ENCODE measurements at regions of chr2 and their contacts with region 1.

Region 1: DNA sequence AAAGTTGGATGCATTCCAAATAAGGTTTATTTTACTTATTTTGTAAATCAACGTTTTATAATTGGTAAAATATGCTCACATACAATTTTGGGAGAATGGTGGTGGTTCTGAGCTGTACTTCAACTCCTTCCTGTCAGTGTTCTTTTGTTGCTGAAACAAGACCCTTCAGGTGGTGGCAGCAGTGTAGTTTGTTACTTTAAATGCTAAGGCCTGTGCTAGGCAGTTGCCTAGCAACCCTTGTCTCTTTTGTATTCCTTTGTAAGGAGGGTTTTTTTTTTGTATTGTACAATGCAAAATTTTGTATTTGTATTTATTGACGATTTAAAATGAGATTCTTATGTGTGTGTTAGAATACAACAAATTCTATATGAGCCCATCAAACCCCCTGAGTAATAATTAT is 166.0 kb upstream of the FAM98A start:
- DNase-seq: no peak
- H3K4me3 ChIP-seq: no peak overlapping the region
- H3K27ac ChIP-seq: no peak overlapping the region
- H3K4me1 ChIP-seq: no peaks in the 10 kb centered on the region
- H3K27me3 ChIP-seq: no peaks in the 10 kb centered on the region
- CTCF ChIP-seq: no peak
- POLR2A ChIP-seq: no peak

Region 2: GRCh38 chr2:33153008-33153407 is 612.1 kb before region 1 on chr2:
- intact Hi-C with region 1: no loop called
- DNase-seq: no peak
- H3K4me3 ChIP-seq: no peak overlapping the region
- H3K27ac ChIP-seq: no peak overlapping the region
- H3K4me1 ChIP-seq: no peaks in the 10 kb centered on the region
- H3K27me3 ChIP-seq: no peaks in the 10 kb centered on the region
- CTCF ChIP-seq: no peak
- POLR2A ChIP-seq: no peak

Region 3: DNA sequence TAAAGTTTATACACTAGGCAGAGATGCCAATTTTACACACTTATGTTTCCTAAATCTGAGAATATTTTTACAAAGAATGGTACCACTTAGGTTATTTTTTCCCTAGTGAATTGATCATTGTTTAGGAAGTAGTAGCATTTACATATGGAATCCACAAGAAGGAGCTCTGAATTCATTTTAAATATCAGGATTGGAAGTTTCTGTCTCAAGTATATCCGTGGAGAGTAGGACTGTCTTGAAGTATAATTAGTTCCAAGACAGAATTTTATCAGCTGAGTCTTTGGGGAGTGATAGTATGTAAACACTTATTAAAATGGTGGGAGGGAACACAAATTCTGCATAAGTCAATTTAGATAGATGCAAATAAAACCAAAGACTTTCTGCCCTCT is 83.8 kb before region 1 on chr2:
- intact Hi-C with region 1: loop called (anchors 10 kb)
- DNase-seq: no peak
- H3K4me3 ChIP-seq: no peak overlapping the region
- H3K27ac ChIP-seq: no peak overlapping the region
- H3K4me1 ChIP-seq: no peaks in the 10 kb centered on the region
- H3K27me3 ChIP-seq: no peaks in the 10 kb centered on the region
- CTCF ChIP-seq: no peak
- POLR2A ChIP-seq: no peak

Region 4: DNA sequence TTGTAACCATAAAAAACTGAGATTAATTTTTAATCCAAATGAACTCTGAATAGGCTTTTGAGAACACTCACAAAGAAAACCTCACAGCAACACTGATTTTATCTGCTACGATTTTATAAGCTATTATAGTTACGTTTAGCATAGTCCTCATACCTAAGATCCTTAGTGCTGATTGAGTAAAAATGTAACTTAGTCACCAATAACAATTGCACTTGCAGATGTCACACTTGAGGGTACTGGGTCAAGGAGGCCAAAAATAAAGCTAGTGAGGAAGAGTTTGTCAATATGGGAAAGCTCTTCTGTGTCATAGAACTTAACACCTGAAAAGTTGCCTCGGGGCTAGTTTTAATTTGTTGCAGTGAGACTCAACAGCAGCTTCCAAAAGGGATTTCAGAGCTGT is 540.5 kb after region 1 on chr2:
- intact Hi-C with region 1: no loop called
- DNase-seq: no peak
- H3K4me3 ChIP-seq: no peak overlapping the region
- H3K27ac ChIP-seq: no peak overlapping the region
- H3K4me1 ChIP-seq: no peaks in the 10 kb centered on the region
- H3K27me3 ChIP-seq: no peaks in the 10 kb centered on the region
- CTCF ChIP-seq: no peak
- POLR2A ChIP-seq: no peak

Region 5: GRCh38 chr2:34419856-34420255 is 654.7 kb after region 1 on chr2:
- intact Hi-C with region 1: loop called (anchors 5 kb)
- DNase-seq: no peak
- H3K4me3 ChIP-seq: no peak overlapping the region
- H3K27ac ChIP-seq: no peak overlapping the region
- H3K4me1 ChIP-seq: no peaks in the 10 kb centered on the region
- H3K27me3 ChIP-seq: no peaks in the 10 kb centered on the region
- CTCF ChIP-seq: no peak
- POLR2A ChIP-seq: no peak